CD8-positive, alpha-beta T cell (primary cell): ENCODE measurements at regions of chr7 and their contacts with region 1.

Region 1: DNA sequence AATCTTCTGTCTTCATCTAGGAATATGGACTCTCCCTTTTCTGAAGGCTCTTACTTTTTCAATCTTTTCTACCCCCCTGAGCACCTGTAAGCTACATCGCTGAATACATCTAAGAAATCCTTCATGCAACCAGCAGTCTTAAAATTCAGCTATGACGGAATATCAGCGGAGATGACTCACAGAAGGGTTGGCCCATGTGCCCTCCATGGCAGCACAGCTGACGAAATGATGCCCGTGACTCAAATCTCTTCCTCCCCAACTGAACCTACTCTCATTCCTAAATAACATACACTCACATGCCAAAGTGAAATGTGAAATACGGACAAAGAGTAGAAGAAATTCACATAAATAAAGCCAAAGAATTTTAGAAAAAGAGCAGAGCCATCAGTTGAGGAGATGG is 30.3 kb upstream of the NCAPG2 start:
- DNase-seq: no peak
- ATAC-seq: no peak
- H3K4me3 ChIP-seq: no peak overlapping the region
- H3K4me3 Mint-ChIP-seq: no peak overlapping the region
- H3K27ac ChIP-seq: no peak overlapping the region
- H3K27ac Mint-ChIP-seq: peak overlapping the region; percentile 23
- H3K4me1 ChIP-seq: no peaks in the 10 kb centered on the region
- H3K4me1 Mint-ChIP-seq: no peaks in the 10 kb centered on the region
- H3K27me3 ChIP-seq: no peaks in the 10 kb centered on the region
- H3K27me3 Mint-ChIP-seq: no peaks in the 10 kb centered on the region
- CTCF ChIP-seq: no peak

Region 2: GRCh38 chr7:157889480-157889879 is 845.4 kb before region 1 on chr7:
- CTCF ChIA-PET with region 1: no interaction called
- POLR2A ChIA-PET with region 1: no interaction called
- intact Hi-C with region 1: loop called in 1 of 2 experiments (anchors 5 kb)
- DNase-seq: no peak
- ATAC-seq: no peak
- H3K4me3 ChIP-seq: no peak overlapping the region
- H3K4me3 Mint-ChIP-seq: no peak overlapping the region
- H3K27ac ChIP-seq: no peak overlapping the region
- H3K27ac Mint-ChIP-seq: no peak overlapping the region
- H3K4me1 ChIP-seq: peaks cover 27% of the 10 kb centered on the region
- H3K4me1 Mint-ChIP-seq: peaks cover 38% of the 10 kb centered on the region
- H3K27me3 ChIP-seq: no peaks in the 10 kb centered on the region
- H3K27me3 Mint-ChIP-seq: no peaks in the 10 kb centered on the region
- CTCF ChIP-seq: no peak